Heart left ventricle (tissue), 16 donors: ENCODE measurements at regions of chr9 and their contacts with region 1.

Region 1: DNA sequence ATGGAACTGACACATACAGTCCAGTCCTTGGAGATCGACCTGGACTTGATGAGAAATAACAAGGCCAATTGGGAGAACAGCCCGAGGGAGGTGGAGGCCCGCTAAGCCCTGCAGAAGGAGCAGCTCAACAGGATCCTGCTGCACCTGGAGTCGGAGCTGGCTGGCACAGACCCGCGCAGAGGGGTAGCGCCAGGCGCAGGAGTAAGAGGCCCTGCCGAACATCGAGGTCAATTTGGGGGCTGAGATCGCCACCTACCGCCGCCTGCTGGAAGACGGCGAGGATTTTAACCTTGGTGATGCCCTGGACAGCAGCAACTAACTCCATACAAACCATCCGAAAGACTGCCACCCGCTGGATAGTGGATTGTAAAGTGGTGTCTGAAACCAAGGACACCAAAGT is 1610.1 kb upstream of the ACO1 start:
- DNase-seq: peak in 1 of 5 donors; percentile 20
- ATAC-seq: no peak
- H3K4me3 ChIP-seq: no peak overlapping the region
- H3K27ac ChIP-seq: no peak overlapping the region
- H3K4me1 ChIP-seq: no peaks in the 10 kb centered on the region
- H3K27me3 ChIP-seq: no peaks in the 10 kb centered on the region
- CTCF ChIP-seq: no peak
- POLR2A ChIP-seq: no peak

Region 2: GRCh38 chr9:30507166-30507565 is 267.2 kb before region 1 on chr9:
- intact Hi-C with region 1: no loop called
- DNase-seq: no peak
- ATAC-seq: no peak
- H3K4me3 ChIP-seq: no peak overlapping the region
- H3K27ac ChIP-seq: no peak overlapping the region
- H3K4me1 ChIP-seq: no peaks in the 10 kb centered on the region
- H3K27me3 ChIP-seq: no peaks in the 10 kb centered on the region
- CTCF ChIP-seq: no peak
- POLR2A ChIP-seq: no peak

Region 3: DNA sequence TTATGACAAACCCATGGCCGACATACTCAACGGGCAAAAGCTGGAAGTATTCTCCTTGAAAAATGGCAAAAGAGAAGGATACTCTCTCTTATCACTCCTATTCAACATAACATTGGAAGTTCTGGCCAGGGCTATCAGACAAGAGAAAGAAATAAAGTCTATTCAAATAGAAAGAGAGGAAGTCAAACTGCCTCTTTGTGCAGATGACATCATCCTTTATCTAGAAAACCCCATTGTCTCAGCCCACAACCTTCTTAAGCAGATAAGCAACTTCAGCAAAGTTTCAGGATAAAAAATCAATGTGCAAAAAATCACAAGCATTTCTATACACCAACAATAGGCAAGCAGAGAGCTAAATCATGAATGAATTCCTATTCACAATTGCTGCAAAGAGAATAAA is 189.8 kb before region 1 on chr9:
- intact Hi-C with region 1: no loop called
- DNase-seq: no peak
- ATAC-seq: no peak
- H3K4me3 ChIP-seq: no peak overlapping the region
- H3K27ac ChIP-seq: no peak overlapping the region
- H3K4me1 ChIP-seq: no peaks in the 10 kb centered on the region
- H3K27me3 ChIP-seq: no peaks in the 10 kb centered on the region
- CTCF ChIP-seq: no peak
- POLR2A ChIP-seq: no peak

Region 4: DNA sequence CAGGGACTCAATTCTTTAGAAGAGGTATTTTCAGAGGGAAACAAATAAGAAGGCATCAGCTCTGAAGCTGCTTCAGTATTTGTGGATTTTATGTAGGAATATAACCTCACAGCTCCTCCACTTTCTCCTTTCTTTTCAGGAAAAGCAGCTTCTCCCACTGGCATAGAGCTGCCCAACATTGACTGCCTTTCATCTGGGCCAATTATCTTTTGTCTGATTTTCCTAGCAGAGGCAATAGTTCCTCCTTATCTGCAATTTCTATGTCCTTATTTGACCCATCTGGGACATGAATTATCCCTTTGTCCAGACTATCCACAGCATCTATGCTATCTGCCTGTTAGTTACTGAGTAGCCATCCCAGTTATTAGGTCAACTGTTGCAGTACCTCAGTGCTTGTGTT is 61.1 kb before region 1 on chr9:
- intact Hi-C with region 1: no loop called
- DNase-seq: no peak
- ATAC-seq: no peak
- H3K4me3 ChIP-seq: no peak overlapping the region
- H3K27ac ChIP-seq: no peak overlapping the region
- H3K4me1 ChIP-seq: no peaks in the 10 kb centered on the region
- H3K27me3 ChIP-seq: no peaks in the 10 kb centered on the region
- CTCF ChIP-seq: no peak
- POLR2A ChIP-seq: no peak

Region 5: GRCh38 chr9:30815585-30815984 is 41.3 kb after region 1 on chr9:
- intact Hi-C with region 1: loop called in 1 of 10 experiments (anchors 10 kb)
- DNase-seq: no peak
- ATAC-seq: no peak
- H3K4me3 ChIP-seq: no peak overlapping the region
- H3K27ac ChIP-seq: no peak overlapping the region
- H3K4me1 ChIP-seq: no peaks in the 10 kb centered on the region
- H3K27me3 ChIP-seq: no peaks in the 10 kb centered on the region
- CTCF ChIP-seq: no peak
- POLR2A ChIP-seq: no peak